Calu3 (cell line): ENCODE measurements at regions of chr6 and their contacts with region 1.

Region 1: DNA sequence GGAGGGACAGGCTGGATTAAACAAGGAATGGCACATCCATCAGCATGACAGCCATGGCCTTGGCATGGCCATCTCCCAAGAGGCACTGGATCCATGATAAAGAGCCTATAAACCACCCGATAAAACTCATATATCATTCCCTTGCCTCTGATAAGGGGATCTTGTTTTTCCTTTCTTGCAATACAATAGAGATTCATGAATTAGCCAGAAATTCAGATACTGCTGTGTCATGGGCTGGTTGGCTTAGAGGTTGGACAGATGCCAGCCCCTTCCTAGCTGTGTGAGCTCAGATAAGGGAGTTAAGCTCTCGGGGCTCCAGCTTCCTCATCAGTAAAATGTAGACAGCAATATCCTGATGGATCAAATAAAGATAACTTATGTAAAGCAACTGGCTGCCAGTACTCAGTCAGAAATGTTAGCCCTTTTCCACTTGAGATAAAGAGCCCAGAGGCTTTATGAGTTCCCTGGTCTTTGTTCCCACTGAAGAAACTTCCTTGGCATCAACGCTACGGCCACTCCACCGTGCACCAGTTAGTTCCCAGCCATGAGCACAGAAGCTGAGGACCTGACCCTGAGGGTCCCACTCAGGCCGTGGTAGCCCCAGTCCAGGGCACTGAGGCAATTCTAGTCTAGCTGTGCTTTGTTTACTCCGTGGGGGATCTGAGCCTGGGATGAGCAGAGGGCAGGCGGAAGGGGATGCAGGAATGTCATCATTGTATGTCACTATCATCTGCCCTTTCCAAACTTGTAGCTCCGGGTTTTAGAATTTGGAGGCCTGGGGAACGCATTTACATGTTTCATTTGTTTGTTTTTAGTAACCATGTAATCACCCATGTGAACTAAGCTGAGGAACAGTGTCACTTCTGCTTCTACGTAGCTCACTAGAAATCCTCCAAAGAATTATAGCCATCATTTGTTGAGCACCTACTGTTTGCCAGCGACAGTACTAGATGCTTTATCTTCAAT is 67.2 kb upstream of the TBC1D7 start:
- DNase-seq: peak; percentile 69
- H3K4me3 Mint-ChIP-seq: no peak overlapping the region
- H3K27ac Mint-ChIP-seq: peak overlapping the region; percentile 74
- H3K4me1 Mint-ChIP-seq: peaks cover 33% of the 10 kb centered on the region
- H3K27me3 Mint-ChIP-seq: no peaks in the 10 kb centered on the region
- CTCF ChIP-seq: no peak

Region 2: DNA sequence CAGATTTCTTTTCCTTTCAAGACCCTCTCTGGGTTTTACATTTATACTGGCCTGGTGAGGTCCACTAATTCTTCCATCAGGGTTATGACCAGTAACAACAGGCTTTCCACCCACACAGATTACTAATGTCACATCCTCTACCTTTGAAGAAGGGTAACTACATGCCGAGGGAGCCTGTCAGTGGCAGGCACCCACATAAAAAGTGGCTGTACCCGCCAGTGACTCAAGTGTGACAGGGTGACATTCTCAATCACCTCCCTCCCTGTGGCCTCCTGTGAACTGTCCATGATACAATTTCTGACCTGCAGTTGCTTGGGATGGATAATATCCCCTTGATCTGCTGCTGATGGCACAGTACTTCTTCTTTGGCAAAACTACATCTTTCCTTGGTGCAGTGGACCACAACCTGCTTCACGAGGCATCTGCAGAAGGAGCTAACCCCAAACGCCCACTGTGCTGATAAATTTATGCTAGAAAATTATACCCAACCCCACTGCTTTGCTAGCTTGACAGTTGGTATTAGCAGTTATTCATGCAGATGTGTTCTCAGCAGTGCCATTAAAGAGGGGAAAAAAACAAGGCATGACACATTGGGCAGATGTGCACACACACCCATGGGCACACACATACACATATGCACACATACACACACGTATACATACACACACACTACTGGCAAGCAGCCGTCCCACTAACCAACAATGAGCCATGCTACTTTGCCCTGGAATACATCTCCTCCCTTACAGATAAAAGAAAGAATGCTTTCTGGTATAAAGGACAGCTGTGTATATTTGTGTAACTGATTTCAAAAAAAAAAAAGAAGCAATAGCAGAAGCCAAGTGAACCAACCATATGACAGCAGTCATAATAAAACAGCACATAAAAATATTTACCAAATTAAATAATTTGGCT is 71.0 kb after region 1 on chr6:
- CTCF ChIA-PET with region 1: interaction called, 10 read pairs
- intact Hi-C with region 1: no loop called
- DNase-seq: no peak
- H3K4me3 Mint-ChIP-seq: no peak overlapping the region
- H3K27ac Mint-ChIP-seq: no peak overlapping the region
- H3K4me1 Mint-ChIP-seq: no peaks in the 10 kb centered on the region
- H3K27me3 Mint-ChIP-seq: no peaks in the 10 kb centered on the region
- CTCF ChIP-seq: no peak

Region 3: GRCh38 chr6:13480631-13481501 is 85.3 kb after region 1 on chr6:
- CTCF ChIA-PET with region 1: no interaction called
- intact Hi-C with region 1: loop called (anchors 5 kb)
- DNase-seq: peak; percentile 9
- H3K4me3 Mint-ChIP-seq: peak overlapping the region; percentile 43
- H3K27ac Mint-ChIP-seq: peak overlapping the region; percentile 73
- H3K4me1 Mint-ChIP-seq: peaks cover 56% of the 10 kb centered on the region
- H3K27me3 Mint-ChIP-seq: no peaks in the 10 kb centered on the region
- CTCF ChIP-seq: no peak

Region 4: GRCh38 chr6:13574149-13574570 is 178.6 kb after region 1 on chr6:
- CTCF ChIA-PET with region 1: no interaction called
- intact Hi-C with region 1: loop called (anchors 5 kb)
- DNase-seq: peak; percentile 91
- H3K4me3 Mint-ChIP-seq: peak overlapping the region; percentile 97
- H3K27ac Mint-ChIP-seq: peak overlapping the region; percentile 84
- H3K4me1 Mint-ChIP-seq: no peaks in the 10 kb centered on the region
- H3K27me3 Mint-ChIP-seq: no peaks in the 10 kb centered on the region
- CTCF ChIP-seq: no peak